Activated CD8-positive, alpha-beta T cell treated with anti-CD3 and anti-CD28 coated beads for 36 hours (primary cell): ENCODE measurements at regions of chr17 and their contacts with region 1.

Region 1: DNA sequence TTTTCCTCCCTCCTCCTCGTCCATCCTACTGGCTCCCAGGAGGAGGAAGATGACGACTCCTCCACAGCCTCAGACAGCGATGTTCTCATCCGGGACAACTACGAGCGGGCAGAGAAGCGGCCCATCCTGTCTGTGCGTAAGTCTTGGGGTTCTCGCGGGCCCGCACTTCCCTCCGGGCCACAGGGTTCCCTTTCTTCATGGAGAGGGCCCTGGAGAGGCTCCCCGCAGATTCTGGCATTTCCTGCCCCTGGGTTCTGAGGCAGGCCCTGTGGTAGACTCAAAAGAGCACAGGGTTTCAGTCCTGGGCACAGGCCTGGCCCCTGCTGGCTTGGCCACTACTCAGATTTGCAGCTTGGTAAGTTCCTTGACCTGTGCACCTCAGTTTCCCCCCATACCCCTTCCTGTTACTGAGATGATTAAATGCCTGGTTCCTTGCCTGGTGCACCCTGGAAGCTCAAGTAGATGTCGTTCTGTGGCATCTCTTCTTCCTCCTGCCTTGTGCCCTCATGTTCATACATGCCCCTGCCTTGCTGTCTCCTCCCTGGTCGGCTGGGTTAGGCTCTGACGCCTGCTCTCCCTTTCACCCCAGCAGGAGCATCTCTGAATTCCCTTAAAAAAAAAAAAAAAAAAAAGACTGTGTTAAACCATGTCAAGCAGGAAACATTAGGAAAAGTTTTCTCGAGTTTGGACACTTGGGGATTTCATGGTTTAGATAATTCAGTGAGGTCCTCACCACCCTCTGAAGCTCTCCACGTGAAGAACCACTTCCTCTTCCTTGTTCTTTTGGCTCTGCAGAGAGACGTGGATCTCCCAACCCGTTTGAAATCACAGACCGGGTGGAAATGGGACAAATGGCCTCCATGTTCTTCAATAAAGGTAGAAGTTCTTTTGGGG is 14.3 kb upstream of the NAT9 start:
- DNase-seq: no peak
- ATAC-seq: no peak
- H3K4me3 Mint-ChIP-seq: no peak overlapping the region
- H3K27ac Mint-ChIP-seq: peak overlapping the region; percentile 27
- H3K4me1 Mint-ChIP-seq: peaks cover 37% of the 10 kb centered on the region
- H3K27me3 Mint-ChIP-seq: no peaks in the 10 kb centered on the region
- CTCF ChIP-seq: no peak

Region 2: DNA sequence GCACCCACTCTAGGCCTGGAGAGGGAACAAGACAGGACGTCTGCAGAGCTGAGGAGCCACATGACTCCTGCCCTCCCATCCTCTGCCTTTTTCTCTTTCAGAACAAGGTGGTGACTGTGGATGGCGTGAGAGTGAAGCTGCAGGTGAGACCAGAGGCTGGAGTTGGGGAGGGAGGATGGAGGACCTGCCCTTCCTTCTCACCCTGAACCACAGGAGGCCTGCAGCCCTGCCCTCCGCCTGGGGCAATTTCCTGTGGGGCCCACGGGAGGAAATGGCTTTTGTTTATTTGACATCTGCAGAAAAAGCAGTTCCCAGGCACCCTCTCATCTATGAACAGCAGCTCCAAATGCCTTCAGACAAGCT is 48.3 kb before region 1 on chr17:
- CTCF ChIA-PET with region 1: interaction called, 67 read pairs
- POLR2A ChIA-PET with region 1: interaction called, 6 read pairs
- intact Hi-C with region 1: no loop called
- DNase-seq: peak; percentile 77
- ATAC-seq: peak; percentile 11
- H3K4me3 Mint-ChIP-seq: peak overlapping the region; percentile 5
- H3K27ac Mint-ChIP-seq: peak overlapping the region; percentile 88
- H3K4me1 Mint-ChIP-seq: peaks cover 80% of the 10 kb centered on the region
- H3K27me3 Mint-ChIP-seq: no peaks in the 10 kb centered on the region
- CTCF ChIP-seq: no peak

Region 3: DNA sequence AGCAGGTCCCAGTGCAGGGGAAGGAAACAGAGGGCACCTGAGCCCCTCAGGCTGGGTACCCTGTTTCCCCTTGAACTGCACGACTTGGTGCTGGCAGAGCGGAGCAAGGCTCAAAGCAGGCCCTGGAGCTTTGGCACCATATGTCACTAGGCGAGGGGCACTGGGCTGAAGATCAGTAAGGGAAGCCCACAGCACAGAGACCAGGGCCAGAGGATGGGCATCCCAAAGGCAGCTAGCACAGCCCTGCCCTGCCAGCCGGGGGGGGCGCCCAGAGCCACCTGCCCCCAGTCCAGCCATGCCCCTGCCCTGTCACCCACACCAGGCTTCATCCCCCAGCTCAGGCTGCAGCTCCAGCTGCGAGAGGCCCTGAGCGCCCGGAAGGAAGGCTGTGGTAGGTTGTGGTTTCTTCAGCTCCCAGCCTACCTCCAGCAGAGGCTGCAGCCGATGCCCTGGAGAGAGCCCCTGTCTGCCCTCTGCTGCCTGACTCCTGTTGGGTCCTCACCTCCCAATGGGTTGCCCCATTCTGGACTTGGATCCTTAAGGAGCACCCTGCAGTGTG is 31.1 kb before region 1 on chr17:
- CTCF ChIA-PET with region 1: interaction called, 56 read pairs
- POLR2A ChIA-PET with region 1: no interaction called
- intact Hi-C with region 1: no loop called
- DNase-seq: peak; percentile 75
- ATAC-seq: peak; percentile 82
- H3K4me3 Mint-ChIP-seq: peak overlapping the region; percentile 51
- H3K27ac Mint-ChIP-seq: peak overlapping the region; percentile 81
- H3K4me1 Mint-ChIP-seq: peaks cover 68% of the 10 kb centered on the region
- H3K27me3 Mint-ChIP-seq: no peaks in the 10 kb centered on the region
- CTCF ChIP-seq: no peak

Region 4: DNA sequence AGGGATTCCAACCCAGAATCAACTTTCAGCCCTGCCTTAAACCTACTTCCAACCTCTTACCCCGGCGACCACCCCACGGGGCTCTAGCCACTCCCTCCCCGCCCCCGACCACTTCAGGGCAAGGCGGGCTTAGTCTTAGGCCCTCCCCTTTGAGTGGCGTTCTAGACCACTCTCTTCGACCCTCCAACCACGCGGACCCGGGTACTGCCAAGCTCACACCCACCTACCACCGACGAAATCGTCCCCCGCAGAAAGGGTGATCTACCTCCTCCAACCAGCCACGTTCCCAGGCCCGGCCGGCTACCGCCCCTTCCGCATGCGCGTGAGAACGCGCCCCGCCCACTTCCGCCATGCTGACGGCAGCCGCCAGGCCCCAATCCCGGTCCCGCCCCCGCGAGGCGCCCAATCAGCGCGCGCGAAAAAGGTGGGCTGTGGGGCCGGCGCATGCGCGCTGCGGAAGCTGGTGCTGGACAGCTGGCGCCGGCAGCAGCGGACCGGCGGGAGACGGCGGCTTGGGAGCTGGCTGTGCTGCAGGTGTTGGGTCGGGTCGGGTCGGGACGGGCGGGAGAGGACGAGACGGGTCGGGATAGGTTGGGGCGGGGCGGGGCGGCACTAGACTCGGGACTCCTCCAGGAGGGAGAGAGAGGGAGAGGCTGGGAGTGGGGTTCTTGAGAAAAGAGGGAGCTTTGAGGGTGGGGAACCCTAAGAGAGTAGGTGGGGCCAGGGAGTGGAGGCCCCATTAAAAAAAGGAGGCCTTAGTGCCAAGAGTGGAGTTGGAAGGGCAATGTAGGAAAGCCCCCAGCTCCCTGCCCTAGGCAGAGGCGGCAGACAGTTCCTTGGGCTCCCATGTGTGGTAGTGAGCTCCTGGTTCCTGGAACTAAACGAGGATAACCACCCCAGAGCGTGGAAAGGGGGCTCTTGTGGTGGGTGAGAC is 14.1 kb before region 1 on chr17 and contains the start of gene NAT9:
- CTCF ChIA-PET with region 1: interaction called, 76 read pairs
- POLR2A ChIA-PET with region 1: interaction called, 4 read pairs
- intact Hi-C with region 1: no loop called
- DNase-seq: peak; percentile 98
- ATAC-seq: peak; percentile 75
- H3K4me3 Mint-ChIP-seq: peak within 1 kb of the TSS; percentile 100
- H3K27ac Mint-ChIP-seq: peak within 1 kb of the TSS; percentile 96
- H3K4me1 Mint-ChIP-seq: peaks cover 57% of the 10 kb centered on the region
- H3K27me3 Mint-ChIP-seq: no peaks in the 10 kb centered on the region
- CTCF ChIP-seq: no peak
- total RNA-seq, gene NAT9: 35.5 to 42.4 TPM

Region 5: DNA sequence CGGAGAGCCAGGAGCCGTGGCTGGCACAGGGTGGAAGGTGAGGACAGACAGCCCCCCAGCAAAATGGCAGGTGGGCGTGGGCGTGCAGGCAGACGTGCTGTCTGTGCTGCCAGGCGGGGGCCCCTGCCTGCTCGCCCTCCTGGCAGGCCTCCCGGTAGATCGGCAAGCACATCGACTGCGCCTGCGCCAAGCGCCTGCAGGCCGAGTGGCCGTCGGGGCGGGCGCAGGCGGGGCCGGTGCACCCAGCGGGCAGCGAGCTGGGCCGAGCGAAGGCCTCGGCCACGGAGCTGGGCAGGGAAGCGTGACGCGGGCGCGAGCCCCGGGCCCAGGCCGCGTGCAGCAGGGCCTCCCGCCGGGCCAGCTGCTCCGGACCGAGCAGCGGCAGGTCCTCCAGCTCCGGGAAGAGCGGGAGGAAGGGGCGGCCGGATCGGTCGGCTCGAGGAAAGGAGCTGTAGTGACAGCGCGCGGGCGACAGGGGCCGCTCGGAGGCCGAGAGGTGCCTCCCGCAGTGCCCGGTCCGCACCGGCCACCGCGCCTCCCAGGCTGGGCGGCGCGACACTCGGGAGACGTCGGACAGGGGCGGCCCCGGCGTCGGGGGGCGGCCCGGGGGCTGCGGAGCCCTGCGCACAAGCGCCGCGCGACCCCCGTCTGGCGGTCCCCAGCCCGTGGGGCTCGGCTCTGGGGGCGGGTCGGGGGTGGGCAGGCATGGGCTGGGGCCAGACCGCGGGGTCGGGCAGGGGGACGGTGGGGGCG is 52.4 kb after region 1 on chr17:
- CTCF ChIA-PET with region 1: interaction called, 29 read pairs
- POLR2A ChIA-PET with region 1: no interaction called
- intact Hi-C with region 1: no loop called
- DNase-seq: peak; percentile 35
- ATAC-seq: peak; percentile 70
- H3K4me3 Mint-ChIP-seq: no peak overlapping the region
- H3K27ac Mint-ChIP-seq: no peak overlapping the region
- H3K4me1 Mint-ChIP-seq: peaks cover 20% of the 10 kb centered on the region
- H3K27me3 Mint-ChIP-seq: peaks cover 14% of the 10 kb centered on the region
- CTCF ChIP-seq: peak; percentile 54

Region 6: DNA sequence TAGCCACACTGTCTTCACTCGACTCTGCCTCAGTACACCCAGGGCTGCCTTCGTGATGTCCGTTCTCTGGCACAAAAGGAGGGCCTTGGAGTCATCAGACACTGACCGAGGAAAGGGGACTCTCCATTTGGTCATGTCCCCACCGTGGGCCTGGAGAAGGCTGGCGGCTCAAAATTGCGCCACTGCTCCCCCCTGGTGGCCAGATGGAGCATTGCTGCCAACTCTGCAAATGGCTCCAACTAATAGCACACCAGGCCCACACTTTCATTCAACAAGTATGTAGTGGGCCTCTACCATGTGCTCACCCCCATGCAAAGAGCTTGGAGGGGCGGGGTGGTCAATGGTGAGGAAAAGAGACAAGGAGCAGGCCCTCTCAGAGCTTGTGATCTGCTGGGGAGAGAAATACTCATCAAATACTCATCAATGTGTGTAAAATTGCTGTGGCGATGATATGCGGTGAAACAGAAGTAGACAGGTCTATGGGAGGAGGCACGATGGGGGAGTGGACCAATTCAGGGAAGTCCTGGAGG is 74.5 kb after region 1 on chr17:
- CTCF ChIA-PET with region 1: interaction called, 247 read pairs
- POLR2A ChIA-PET with region 1: interaction called, 6 read pairs
- intact Hi-C with region 1: loop called (anchors 1 kb)
- DNase-seq: peak; percentile 83
- ATAC-seq: peak; percentile 75
- H3K4me3 Mint-ChIP-seq: no peak overlapping the region
- H3K27ac Mint-ChIP-seq: no peak overlapping the region
- H3K4me1 Mint-ChIP-seq: peaks cover 18% of the 10 kb centered on the region
- H3K27me3 Mint-ChIP-seq: peaks cover 17% of the 10 kb centered on the region
- CTCF ChIP-seq: peak; percentile 90